Breast epithelium (tissue), 4 donors: ENCODE measurements at regions of chr9 and their contacts with region 1.

Region 1: GRCh38 chr9:131370638-131371037 is 23.2 kb upstream of the PRRC2B start:
- DNase-seq: no peak
- H3K4me3 ChIP-seq: no peak overlapping the region
- H3K27ac ChIP-seq: no peak overlapping the region
- H3K4me1 ChIP-seq: no peaks in the 10 kb centered on the region
- H3K27me3 ChIP-seq: no peaks in the 10 kb centered on the region
- CTCF ChIP-seq: no peak
- POLR2A ChIP-seq: no peak

Region 2: DNA sequence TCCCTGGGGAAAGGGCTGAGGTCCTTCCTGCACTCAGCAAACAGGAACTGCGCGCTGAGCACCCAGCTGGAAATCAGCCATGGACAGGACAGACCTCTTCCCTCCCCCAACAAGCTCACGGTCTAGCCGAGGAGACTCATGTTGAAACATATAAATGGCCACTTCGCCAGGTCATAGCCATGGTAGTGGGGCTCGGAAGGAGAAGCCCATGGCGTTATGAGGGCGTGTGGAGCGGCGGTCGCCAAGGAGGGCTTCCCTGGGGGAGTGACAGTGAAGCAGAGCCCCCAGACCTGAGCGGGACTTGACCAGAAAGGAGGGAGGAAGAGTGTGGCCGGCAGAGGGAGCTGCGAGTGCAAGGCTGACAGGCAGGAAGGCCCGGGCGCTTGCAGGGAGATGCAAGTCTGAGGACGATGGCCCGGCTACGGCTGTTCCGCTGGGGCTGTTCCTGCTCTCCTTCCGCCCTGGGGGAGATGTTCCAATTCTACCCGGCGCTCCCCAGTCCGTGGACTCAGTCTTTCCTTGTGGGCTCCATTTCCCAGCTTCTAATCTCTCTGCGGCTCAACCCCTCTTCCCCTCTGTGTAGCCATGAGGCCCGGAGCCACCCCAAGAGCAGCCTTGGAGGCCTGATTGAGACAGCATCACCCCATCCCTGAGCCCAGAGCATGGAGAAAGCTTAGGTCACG is 20.6 kb before region 1 on chr9:
- intact Hi-C with region 1: no loop called
- DNase-seq: peak; percentile 86 to 87
- H3K4me3 ChIP-seq: peak overlapping the region; percentile 19 to 53 (median 24)
- H3K27ac ChIP-seq: no peak overlapping the region
- H3K4me1 ChIP-seq: peaks cover 0 to 7% of the 10 kb centered on the region in 2 donors
- H3K27me3 ChIP-seq: no peaks in the 10 kb centered on the region
- CTCF ChIP-seq: peak; percentile 73 to 93 (median 88)
- POLR2A ChIP-seq: no peak

Region 3: DNA sequence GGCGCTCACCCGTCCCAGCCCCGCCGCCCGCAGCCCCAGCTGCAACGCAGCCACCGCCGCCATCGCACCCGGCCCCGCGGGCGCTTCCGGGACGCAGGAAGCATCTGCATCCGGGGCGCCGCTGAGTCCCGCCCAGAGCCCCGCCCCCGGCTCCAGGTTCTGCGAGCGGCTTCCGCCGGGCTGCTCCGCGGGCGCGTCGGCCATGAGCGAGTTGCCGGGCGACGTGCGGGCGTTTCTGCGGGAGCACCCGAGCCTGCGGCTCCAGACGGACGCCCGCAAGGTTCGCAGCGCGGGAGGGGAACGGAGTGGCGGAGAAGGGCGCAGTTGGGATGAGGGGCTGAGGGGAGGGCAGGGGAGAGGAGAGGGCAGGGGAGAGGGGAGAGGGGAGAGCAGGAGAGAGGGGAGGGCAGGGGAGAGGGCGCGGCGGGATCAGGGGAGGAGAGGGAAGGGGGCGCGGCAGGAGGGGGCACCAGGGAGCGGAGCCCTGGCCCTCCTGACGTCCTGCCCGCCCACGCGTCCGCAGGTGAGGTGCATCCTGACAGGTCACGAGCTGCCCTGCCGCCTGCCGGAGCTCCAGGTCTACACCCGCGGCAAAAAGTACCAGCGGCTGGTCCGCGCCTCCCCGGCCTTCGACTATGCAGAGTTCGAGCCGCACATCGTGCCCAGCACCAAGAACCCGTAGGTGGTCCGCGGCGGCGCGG is 1985.9 kb after region 1 on chr9 and contains the starts of genes SURF1 and SURF2:
- intact Hi-C with region 1: loop called (anchors 10 kb)
- DNase-seq: peak; percentile 82 to 88
- H3K4me3 ChIP-seq: peak within 1 kb of the TSS; percentile 81 to 92 (median 89)
- H3K27ac ChIP-seq: peak within 1 kb of the TSS; percentile 80 to 88
- H3K4me1 ChIP-seq: peaks cover 0 to 20% of the 10 kb centered on the region in 2 donors
- H3K27me3 ChIP-seq: no peaks in the 10 kb centered on the region
- CTCF ChIP-seq: peak in 1 of 3 donors; percentile 9
- POLR2A ChIP-seq: no peak
- total RNA-seq, gene SURF1: 45.9 to 61.4 (median 46.8) TPM
- total RNA-seq, gene SURF2: 16.7 to 25.9 (median 25.2) TPM